HepG2 (cell line): ENCODE measurements at regions of chr20 and their contacts with region 1.

Region 1: DNA sequence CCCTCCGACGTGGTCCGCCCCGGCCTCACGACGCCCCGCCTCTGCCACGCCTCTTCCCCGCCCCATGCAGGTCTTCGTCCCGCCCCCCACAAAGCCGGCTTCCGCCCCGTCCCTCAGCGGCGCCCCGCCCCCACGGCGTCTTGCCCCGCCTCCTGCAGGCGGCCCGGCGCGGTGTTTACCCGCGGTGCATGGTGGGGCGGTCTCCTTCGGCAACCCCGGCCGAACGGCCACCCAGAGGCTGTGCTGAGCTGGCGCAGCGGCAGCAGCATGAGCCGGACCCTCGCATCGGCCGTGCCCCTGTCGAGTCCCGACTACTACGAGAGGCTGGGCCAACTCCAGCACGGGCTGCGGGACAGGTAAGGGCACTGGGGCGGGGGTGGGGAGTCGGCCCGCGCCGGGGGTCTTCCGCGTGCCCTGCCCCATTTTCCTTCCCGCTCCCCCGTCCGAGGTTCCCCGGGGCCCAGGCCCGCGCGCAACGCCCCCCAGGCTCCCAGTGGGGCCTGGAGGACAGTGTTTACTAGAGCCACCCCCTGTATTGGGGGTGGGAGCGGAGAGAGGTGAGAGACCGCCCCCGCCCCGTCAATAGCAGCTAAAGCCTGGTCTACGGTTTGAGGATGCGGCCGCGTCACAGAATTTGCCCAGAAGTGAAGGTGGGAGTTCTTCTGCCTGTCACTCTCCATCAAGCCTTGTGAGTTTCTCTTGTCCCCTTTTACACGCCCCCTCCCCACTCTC is at the start of gene KIZ:
- DNase-seq: peak; percentile 93
- ATAC-seq: peak; percentile 97
- H3K4me3 ChIP-seq: peak within 1 kb of the TSS; percentile 86 to 94 (median 93)
- H3K27ac ChIP-seq: peak within 1 kb of the TSS; percentile 80
- H3K4me1 ChIP-seq: peaks cover 48% of the 10 kb centered on the region
- H3K27me3 ChIP-seq: no peaks in the 10 kb centered on the region; a peak in 1 of 5 replicates
- CTCF ChIP-seq: peak; percentile 70
- EP300 ChIP-seq: peak in 1 of 2 experiments; percentile 35; a peak in 1 of 4 replicates
- POLR2A ChIP-seq: peak; percentile 98
- RAD21 ChIP-seq: peak; percentile 90
- total RNA-seq, gene KIZ: 46.3 and 55.6 TPM in 2 replicates

Region 2: GRCh38 chr20:21089395-21089794 is 36.6 kb before region 1 on chr20:
- CTCF ChIA-PET with region 1: no interaction called
- POLR2A ChIA-PET with region 1: no interaction called
- in situ Hi-C with region 1: no loop called
- intact Hi-C with region 1: loop called (anchors 2 kb)
- DNase-seq: peak; percentile 63
- ATAC-seq: no peak
- H3K4me3 ChIP-seq: peak overlapping the region in 2 of 3 experiments; percentile 0 to 4; a peak in 2 of 6 replicates
- H3K27ac ChIP-seq: no peak overlapping the region
- H3K4me1 ChIP-seq: peaks cover 39% of the 10 kb centered on the region
- H3K27me3 ChIP-seq: no peaks in the 10 kb centered on the region
- CTCF ChIP-seq: no peak
- EP300 ChIP-seq: no peak
- POLR2A ChIP-seq: no peak
- RAD21 ChIP-seq: no peak

Region 3: DNA sequence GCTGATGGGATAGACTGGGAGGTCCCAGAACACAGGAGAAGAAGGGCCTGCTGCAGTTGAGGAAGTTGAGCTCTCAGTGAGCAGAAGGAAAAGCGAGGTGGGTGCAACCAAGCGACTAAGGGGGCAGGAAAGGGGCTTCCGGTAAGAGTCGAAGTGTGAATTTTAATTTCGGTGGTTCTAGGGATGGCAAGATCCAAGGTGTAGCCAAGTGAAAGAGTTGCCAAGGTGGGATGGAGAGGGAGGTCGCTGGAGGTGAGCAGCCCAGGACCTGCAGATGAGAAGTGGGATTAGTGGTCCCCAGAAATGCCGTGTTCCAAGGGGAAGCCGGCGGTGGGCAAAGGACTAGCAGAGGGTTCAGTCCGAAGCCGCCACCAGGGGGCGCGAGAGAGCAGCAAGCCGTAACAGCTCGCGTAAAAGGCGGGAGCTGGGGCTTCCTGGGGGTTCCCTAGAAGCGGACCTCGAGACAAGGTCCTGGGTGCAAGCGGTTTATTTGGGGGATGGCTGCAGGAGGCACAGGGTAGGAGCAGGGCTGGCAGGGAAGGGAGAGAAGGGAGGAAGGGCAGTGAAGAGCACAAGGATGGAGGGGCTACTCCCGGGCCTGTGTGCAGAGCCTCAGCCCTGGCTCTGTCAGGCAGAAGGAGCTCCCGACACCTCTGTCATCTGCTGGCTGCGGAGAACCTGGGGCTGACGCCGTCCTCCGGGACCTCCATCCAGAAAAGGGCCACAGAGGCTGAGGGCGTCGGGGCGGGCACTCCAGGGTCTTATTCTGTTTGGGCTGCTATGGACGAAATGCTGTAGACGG is 683.0 kb after region 1 on chr20:
- CTCF ChIA-PET with region 1: no interaction called
- POLR2A ChIA-PET with region 1: no interaction called
- in situ Hi-C with region 1: no loop called
- intact Hi-C with region 1: no loop called
- DNase-seq: peak; percentile 31
- ATAC-seq: peak; percentile 92
- H3K4me3 ChIP-seq: no peak overlapping the region
- H3K27ac ChIP-seq: no peak overlapping the region
- H3K4me1 ChIP-seq: no peaks in the 10 kb centered on the region
- H3K27me3 ChIP-seq: peaks cover 3 to 10% of the 10 kb centered on the region in 2 experiments; a peak in 2 of 5 replicates
- CTCF ChIP-seq: peak; percentile 94
- EP300 ChIP-seq: no peak
- POLR2A ChIP-seq: no peak
- RAD21 ChIP-seq: peak; percentile 83